ENCODE measurements at regions of chr6 and their contacts with region 1.

Region 1: GRCh38 chr6:154754152-154754551 is 20.9 kb downstream of the SCAF8 start:
- DNase-seq: no peak
- ATAC-seq: peak; percentile 50
- H3K4me3 ChIP-seq: no peak overlapping the region
- H3K4me3 Mint-ChIP-seq: peak overlapping the region in 4 of 10 donors; percentile 6 to 48 (median 23)
- H3K27ac ChIP-seq: no peak overlapping the region
- H3K27ac Mint-ChIP-seq: peak overlapping the region in 4 of 9 donors; percentile 19 to 90 (median 55)
- H3K4me1 ChIP-seq: peaks cover 13 to 15% of the 10 kb centered on the region in 2 donors
- H3K4me1 Mint-ChIP-seq: peaks cover 27 to 89% (median 79%) of the 10 kb centered on the region in 7 donors
- H3K27me3 ChIP-seq: no peaks in the 10 kb centered on the region
- H3K27me3 Mint-ChIP-seq: no peaks in the 10 kb centered on the region

Region 2: GRCh38 chr6:154738551-154738961 is 15.6 kb before region 1 on chr6:
- CTCF ChIA-PET with region 1: no interaction called
- POLR2A ChIA-PET with region 1: interaction called, 8 read pairs
- intact Hi-C with region 1: loop called in 1 of 2 experiments (anchors 2 kb)
- DNase-seq: no peak
- ATAC-seq: no peak
- H3K4me3 ChIP-seq: no peak overlapping the region
- H3K4me3 Mint-ChIP-seq: peak overlapping the region in 8 of 10 donors; percentile 5 to 92 (median 48)
- H3K27ac ChIP-seq: no peak overlapping the region
- H3K27ac Mint-ChIP-seq: peak overlapping the region in 3 of 9 donors; percentile 19 to 41 (median 22)
- H3K4me1 ChIP-seq: peaks cover 22 to 35% of the 10 kb centered on the region in 2 donors
- H3K4me1 Mint-ChIP-seq: peaks cover 37 to 87% (median 76%) of the 10 kb centered on the region in 7 donors
- H3K27me3 ChIP-seq: no peaks in the 10 kb centered on the region
- H3K27me3 Mint-ChIP-seq: no peaks in the 10 kb centered on the region

Measured in naive thymus-derived CD4-positive, alpha-beta T cell (primary cell).